ENCODE measurements at regions of chr20 and their contacts with region 1.

Region 1: DNA sequence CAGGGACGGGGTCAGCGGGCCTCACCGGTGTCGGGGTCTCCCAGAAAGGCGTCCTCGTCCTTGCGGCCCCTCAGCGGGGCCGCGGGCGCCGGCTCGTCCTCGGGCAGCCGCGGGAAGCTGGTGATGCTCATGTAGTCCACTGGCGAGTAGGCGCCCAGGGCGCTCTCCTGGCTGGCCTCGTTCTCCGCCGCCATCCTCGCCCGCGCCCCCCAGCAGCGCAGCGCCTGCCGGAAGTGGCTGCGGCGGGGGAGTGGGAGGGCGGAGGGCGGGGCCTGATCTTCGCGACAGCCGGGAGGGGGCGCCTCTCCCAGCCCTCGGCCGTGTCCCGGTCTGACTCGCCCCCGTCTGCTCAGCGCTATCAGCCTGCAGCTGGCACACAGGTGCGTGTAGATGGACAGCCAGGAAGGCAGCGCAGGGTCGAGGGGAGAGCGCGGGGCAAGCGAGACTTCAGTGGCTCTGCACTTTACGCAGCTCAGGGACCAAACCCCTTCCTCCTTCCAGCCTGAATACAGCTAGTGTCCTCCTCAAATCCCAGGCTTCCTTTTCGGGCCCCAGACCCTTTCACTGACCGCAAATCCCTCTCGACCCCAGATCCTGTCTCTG is at the start of gene GGT7:
- DNase-seq: peak; percentile 70 to 89
- H3K4me3 ChIP-seq: peak within 1 kb of the TSS; percentile 73 to 77
- H3K27ac ChIP-seq: peak within 1 kb of the TSS; percentile 79 to 83
- H3K4me1 ChIP-seq: peaks cover 0 to 43% (median 28%) of the 10 kb centered on the region in 4 donors
- H3K27me3 ChIP-seq: no peaks in the 10 kb centered on the region
- CTCF ChIP-seq: peak; percentile 54 to 60

Region 2: GRCh38 chr20:34781220-34781619 is 91.5 kb before region 1 on chr20:
- intact Hi-C with region 1: no loop called
- DNase-seq: no peak
- H3K4me3 ChIP-seq: no peak overlapping the region
- H3K27ac ChIP-seq: no peak overlapping the region
- H3K4me1 ChIP-seq: no peaks in the 10 kb centered on the region
- H3K27me3 ChIP-seq: no peaks in the 10 kb centered on the region
- CTCF ChIP-seq: no peak

Region 3: DNA sequence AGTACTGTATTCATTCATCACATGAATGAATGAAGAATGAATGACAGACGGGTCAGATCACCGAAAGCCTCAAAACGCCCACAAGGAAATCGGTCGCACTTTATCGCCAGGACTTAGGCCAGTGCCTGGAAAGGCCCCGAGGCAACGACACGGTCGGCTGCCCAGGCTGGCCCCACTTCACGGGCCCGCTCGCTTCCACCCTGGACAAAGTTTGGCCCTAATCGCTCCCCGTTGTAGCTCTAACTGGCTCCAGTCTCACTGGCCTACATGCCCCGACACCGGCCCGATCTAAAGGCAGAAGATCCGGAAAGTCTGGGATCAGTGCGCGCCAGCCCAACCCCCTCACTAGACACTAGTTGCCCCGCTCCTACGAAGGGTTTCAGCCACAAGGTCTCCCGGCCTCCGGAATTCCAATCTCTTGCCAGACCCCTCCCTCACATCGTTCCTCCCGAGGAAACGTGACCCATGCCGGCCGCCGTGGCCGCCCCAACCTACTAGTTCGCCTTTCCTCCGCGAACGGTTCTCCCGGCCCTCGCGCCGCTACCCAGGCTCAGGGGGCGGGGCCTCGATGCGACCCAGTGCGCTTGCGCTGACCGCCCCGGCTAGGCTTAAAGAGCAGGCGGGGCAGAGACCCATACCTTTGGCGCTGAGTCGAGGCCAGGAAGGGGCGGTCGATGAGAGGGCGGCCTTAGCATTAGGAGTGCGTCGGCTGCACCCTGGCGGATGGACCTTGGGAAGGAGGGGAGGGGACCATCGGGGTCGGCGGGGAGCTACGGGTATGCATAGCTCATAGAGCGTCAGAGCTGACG is 82.7 kb after region 1 on chr20 and contains the starts of genes GSS and MYH7B:
- intact Hi-C with region 1: loop called (anchors 2 kb)
- DNase-seq: peak; percentile 97 to 98
- H3K4me3 ChIP-seq: peak within 1 kb of the TSS; percentile 63 to 64
- H3K27ac ChIP-seq: peak within 1 kb of the TSS; percentile 83 to 90
- H3K4me1 ChIP-seq: peaks cover 0 to 18% (median 9%) of the 10 kb centered on the region in 4 donors
- H3K27me3 ChIP-seq: no peaks in the 10 kb centered on the region
- CTCF ChIP-seq: peak; percentile 55 to 70

Region 4: DNA sequence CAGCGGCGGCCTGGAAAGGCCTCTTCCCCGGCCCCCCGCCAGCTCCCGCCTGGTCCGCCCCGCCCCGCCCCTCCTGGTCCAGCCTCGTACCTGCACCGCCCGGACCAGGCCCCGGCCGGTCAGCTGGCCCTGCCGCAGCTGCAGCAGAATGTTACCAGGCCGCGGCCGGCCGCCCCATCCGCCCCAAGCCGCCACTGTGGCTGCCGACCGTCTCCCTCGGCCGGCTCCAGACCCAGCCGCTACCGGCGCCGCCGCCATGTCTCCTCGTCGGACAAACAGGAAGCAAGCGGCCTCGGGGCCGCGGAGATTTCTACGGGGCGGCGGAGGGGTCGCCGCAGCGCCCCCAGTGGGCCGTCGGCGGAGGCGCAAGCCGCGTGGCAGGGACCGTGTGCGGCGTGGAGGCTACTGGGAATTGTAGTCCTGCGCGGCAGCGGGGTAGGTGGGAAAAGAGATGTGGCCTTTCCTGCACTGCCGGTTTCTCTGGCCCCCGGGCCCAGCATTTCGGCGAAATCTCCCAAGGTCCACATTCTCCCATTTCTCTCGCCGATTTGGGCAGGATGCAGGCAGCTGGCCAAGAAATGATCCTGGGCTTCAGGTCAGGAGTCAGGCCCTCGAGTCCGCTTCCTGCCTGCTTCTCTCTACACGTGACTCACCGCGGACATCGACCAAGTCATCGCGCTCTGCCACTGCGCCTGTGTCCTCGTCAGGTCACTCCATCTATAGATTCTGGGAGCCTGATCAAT is 220.0 kb after region 1 on chr20 and contains the start of gene TRPC4AP:
- intact Hi-C with region 1: loop called (anchors 5 kb)
- DNase-seq: peak; percentile 86 to 94
- H3K4me3 ChIP-seq: peak within 1 kb of the TSS; percentile 69 to 88
- H3K27ac ChIP-seq: peak within 1 kb of the TSS; percentile 88 to 93
- H3K4me1 ChIP-seq: peaks cover 0 to 49% (median 17%) of the 10 kb centered on the region in 4 donors
- H3K27me3 ChIP-seq: no peaks in the 10 kb centered on the region
- CTCF ChIP-seq: peak; percentile 96 to 98